ENCODE measurements at regions of chr4 and their contacts with region 1.

Region 1: DNA sequence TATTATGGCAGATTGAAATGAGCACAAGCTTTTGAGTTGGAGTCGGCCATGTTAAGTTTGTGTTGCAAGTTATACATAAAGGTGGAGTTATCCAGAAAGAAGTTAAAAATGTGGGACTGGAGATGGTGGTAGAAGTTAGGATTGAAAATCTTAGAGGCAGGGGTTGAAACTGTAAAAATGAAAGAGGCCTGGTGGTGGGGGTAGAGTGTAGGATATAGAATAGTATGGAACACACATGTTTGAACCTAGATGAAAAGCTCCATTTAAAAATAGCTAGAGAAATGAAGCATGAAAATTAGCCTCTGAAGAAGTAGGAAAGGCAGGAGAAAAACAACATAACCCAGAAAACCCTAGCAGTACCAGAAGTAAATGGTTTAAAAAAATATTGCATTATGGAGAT is 131.8 kb upstream of the ENPEP start:
- DNase-seq: peak; percentile 13
- CTCF ChIP-seq: peak; percentile 50

Region 2: DNA sequence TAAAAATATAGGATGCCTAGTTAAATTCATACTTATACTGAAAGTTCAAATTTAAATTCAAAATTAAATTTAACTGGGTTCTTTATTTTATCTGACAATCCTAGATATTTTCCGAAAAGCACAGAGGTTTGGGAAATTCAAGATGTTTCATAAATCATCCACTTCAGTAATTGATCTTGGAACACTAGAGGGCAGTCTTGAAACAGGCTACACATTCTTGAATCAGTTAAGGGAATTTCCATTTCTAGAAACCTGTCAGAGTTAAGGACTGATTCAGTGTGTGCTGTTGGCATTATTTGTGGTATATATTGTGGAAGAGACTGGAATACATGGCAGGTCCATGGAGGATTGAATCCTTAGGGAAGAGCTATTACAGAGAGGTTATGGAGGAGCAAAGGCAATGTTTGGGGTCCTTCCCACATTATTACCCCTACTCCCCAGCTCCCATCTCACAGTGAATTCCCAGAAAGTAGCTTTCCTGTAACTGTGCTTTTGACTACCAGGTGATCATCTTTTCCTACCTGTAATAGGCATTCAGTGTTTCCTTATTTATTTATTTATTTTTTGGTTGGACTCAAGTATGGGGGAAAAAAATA is 338.6 kb before region 1 on chr4:
- in situ Hi-C with region 1: loop called (anchors 25 kb)
- DNase-seq: peak; percentile 65
- CTCF ChIP-seq: peak; percentile 67

Region 3: GRCh38 chr4:110231869-110232268 is 112.3 kb before region 1 on chr4:
- in situ Hi-C with region 1: no loop called
- DNase-seq: no peak
- CTCF ChIP-seq: no peak

Region 4: GRCh38 chr4:110508827-110509710 is 164.9 kb after region 1 on chr4:
- in situ Hi-C with region 1: loop called (anchors 10 kb)
- DNase-seq: no peak
- CTCF ChIP-seq: peak; percentile 66

Region 5: DNA sequence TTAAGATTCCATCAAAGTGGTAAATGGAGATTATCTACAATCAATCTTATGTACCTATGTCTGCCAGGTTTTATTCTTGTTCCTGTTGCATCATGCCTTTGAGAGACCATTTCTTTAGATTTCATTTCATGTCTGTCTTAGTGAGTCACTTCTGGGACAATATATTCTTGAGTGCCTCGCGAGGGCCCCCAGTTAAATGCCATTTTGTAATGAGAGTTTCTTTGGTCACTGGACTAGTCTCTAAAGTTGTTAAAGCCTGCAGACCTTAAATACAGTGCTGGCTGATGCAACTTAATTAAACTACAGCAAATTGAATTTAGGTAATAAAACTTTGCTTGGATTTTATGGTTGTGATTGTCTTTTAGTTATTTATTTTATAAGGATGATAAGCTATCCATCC is 365.9 kb after region 1 on chr4:
- in situ Hi-C with region 1: no loop called
- DNase-seq: no peak
- CTCF ChIP-seq: no peak